Left cardiac atrium (tissue), 4 donors: ENCODE measurements at regions of chr2 and their contacts with region 1.

Region 1: GRCh38 chr2:2127467-2127866 is 203.6 kb downstream of the MYT1L start:
- DNase-seq: no peak
- ATAC-seq: no peak

Region 2: DNA sequence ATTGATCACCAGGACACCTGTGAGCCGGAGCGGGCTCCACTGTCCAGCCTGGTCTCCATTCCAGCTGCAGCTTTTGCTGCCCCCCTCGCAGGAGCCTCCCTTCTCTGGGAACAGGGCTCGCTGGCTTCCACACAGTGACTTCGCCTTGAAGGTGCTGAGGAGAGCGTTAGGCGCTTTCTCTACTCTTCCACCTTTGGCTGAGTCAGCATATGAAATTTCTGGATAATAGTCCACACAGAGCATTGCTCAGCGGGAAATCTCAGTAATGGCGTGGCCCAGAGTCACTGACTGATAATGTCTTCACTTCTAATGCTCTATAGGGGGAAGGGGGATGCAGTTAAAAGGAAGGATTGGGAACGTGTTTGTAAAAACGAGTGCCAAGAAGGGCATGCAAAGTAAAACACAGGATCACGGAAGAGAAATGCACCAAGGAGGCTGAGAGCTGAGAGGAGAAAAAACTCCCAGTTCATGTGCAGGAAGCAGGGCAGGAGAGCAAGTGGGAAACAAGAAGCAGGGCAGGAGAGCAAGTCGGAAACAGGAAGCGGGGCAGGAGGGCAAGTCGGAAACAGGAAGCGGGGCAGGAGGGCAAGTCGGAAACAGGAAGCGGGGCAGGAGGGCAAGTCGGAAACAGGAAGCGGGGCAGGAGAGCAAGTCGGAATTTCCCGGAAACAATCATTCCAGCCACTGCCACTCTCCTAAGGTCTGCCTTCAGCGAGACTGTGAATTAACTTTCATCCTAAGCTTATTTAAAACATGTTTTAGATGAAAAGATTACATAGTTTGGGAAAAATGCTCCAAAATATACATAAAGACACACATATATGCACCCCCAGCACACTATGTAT is 125.9 kb after region 1 on chr2:
- intact Hi-C with region 1: no loop called
- DNase-seq: no peak
- ATAC-seq: no peak

Region 3: GRCh38 chr2:2286592-2286991 is 159.1 kb after region 1 on chr2:
- intact Hi-C with region 1: loop called (anchors 5 to 10 kb)
- DNase-seq: no peak
- ATAC-seq: no peak

Region 4: DNA sequence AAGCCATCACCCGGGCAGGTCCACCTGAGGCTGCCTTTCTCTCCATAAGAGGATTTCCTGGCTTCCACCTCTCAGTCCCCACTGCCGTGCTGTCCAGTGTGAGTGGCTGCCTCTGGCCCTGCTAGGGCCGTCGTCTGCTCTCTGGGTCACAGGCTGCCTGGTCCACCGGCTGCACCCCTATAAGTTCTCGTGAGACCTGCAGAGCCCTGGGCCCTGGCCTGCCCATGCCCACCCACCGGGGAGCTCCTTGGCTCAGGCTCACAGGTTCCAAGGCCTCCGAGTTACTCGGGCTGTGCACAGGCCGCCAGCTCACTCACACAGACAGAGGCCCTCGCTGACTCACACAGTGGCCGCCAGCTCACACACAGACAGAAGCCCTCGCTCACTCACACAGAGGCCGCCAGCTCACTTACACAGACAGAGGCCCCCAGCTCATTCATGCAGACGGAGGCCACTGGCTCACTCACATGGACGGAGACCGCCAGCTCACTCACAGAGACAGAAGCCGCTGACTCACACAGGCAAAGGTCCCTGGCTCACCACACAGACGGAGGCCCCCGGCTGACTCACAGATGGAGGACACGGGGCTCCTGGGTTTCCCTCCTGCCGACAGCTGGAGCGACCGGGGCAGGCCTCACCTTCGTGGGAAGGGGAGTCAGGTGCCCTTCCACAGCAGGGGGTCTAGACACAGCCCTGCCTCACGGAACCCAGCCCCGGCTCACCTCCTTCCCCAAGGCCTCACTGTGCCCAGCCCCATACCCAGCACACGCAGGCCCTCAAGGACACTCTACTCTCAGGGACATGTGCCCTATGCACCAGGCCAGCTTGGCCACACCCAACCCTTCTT is 537.7 kb after region 1 on chr2:
- intact Hi-C with region 1: no loop called
- DNase-seq: peak; percentile 39
- ATAC-seq: no peak